GM13977 (cell line): ENCODE measurements at regions of chr9 and their contacts with region 1.

Region 1: DNA sequence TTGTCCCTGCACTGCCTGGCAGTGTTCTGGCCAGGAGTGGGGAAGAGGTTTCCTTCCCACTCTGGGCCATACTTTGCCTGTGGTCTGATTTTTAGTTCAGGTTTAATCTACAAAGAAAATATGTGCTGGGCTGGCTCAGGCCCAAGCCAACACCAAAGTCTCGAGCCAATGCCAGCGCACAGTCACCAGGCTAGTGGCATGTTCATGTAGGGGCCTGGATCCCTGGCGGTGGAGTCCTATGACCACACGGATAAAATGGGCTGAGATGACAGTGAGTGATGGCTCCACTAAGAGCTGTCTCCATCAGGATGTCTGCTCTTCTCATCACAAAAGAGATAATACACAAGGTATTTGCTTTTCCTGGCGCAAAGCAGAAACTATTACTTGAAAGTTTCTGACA is 92.8 kb upstream of the PTPN3 start:
- DNase-seq: no peak
- CTCF ChIP-seq: no peak

Region 2: GRCh38 chr9:109817846-109818472 is 227.0 kb after region 1 on chr9:
- in situ Hi-C with region 1: loop called (anchors 25 kb)
- DNase-seq: peak; percentile 53
- CTCF ChIP-seq: peak; percentile 85